Psoas muscle (tissue), 8 donors: ENCODE measurements at regions of chr3 and their contacts with region 1.

Region 1: DNA sequence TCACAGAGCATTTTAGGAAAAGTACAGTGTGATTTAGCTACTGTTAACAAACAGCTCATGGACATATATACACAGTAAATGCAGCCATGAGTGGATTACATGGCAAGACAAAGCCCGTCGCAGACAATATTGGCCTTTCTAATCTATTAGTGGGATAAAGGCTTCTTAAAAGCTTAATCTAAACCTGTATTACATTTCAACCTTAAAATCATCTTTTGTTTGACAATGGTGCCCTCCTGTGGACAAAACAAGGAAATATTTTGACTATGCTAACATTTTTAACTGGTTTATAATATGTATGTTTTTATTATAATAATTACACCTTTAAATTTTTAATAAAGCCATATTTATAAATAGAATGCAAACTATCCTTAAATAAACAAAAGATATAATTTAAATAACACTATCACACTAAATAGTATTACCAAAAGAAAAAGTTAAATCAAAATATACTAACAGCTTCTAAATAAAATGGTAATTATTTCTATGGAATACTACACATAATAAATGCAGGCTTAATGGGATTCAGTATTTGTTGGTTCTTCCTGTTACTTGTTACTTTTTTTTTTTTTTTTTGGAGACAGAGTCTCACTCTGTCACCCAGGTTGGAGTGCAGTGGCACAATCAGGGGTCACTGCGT is 38.6 kb downstream of the TAFA4 start:
- DNase-seq: no peak
- ATAC-seq: no peak
- H3K4me3 ChIP-seq: no peak overlapping the region
- H3K27ac ChIP-seq: no peak overlapping the region
- H3K4me1 ChIP-seq: no peaks in the 10 kb centered on the region
- H3K27me3 ChIP-seq: peaks cover 0 to 2% (median 0%) of the 10 kb centered on the region in 3 donors
- CTCF ChIP-seq: peak; percentile 60

Region 2: DNA sequence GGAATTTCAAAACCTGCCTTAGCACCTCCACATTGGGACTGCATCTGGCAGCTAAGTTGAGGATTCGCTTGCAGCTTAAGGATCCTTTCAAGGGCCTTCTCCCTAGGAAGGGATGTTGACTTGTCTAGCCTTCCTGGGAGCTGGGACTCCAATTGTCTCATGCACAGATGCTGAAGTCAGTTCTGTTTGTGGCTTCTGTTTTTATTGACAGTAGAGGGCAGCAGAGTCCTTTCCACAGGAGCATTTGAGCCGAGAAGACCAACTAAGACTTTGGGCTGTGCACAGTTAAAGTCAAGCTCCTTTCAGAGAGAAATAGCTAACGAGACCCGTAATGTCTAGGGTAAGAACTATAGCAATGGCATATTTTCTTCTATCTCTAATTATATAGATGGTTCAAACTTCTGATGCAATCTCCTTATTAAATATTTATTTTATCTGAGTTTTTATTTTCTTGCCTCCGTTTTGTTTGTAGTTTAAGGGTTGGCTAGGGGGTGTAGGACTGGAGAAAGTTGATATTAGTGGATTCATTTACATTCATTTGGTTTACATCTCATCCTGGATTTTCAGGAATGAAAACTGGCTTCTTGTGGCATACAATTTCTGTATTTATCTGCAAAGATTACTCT is 1955.3 kb before region 1 on chr3:
- intact Hi-C with region 1: loop called (anchors 10 kb)
- DNase-seq: no peak
- ATAC-seq: peak; percentile 50 to 70 (median 64)
- H3K4me3 ChIP-seq: no peak overlapping the region
- H3K27ac ChIP-seq: no peak overlapping the region
- H3K4me1 ChIP-seq: no peaks in the 10 kb centered on the region
- H3K27me3 ChIP-seq: peaks cover 0 to 2% (median 0%) of the 10 kb centered on the region in 3 donors
- CTCF ChIP-seq: peak; percentile 67

Region 3: DNA sequence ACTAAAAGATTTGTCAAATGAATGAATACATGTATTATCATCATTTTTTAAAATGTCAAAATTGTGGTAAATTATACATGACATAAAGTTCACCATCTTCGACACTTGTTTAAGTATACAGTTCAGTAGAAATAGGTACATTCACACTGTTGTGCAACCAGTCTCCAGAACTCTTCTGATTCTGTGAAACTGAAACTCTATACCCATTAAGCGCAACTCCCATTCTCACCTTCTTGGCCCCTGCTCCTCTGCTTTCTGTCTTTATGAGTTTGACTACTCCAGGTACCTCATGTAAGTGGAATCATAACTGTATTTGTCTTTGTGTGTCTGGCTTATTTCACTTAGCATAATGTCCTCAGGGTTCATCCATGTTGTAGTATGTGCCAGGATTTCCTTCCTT is 1945.7 kb before region 1 on chr3:
- intact Hi-C with region 1: loop called in 1 of 2 experiments (anchors 10 kb)
- DNase-seq: no peak
- ATAC-seq: no peak
- H3K4me3 ChIP-seq: no peak overlapping the region
- H3K27ac ChIP-seq: no peak overlapping the region
- H3K4me1 ChIP-seq: no peaks in the 10 kb centered on the region
- H3K27me3 ChIP-seq: no peaks in the 10 kb centered on the region
- CTCF ChIP-seq: no peak

Region 4: DNA sequence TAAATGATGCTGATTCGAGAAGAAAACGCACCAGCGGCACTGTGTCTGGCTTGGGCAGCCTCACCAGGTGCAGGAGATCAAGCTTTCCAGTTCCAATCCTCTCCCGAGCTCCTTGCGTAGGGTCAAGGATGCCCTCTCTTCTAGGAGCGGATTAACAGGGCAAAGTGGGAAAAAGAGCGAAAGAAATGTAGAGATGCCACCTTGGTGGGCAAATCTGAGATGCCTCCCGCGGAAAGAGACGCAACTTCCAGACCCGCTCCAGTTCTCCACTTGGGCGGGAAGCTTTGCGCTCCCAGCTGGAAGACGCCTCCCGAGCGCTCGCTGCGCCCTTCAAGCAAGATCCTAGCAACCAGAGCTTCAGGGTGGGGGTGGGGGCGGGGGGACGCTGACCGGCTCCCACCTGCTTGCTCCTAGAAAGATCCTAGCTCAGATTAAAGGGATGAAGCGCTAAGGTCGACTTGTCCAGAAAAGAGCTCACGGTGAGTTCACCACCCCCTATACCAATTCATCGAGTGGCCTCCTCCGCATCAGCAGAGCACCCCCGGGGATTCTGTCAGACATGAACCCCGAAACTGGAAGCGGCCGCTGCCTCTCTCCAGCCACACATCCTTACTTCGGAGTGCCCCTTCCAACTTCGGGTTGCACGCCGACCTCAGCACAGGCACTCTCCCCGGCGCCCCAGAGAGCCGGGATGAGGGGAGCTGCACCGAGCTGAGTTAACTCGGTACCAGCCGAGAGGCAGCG is 37.9 kb after region 1 on chr3:
- intact Hi-C with region 1: no loop called
- DNase-seq: no peak
- ATAC-seq: no peak
- H3K4me3 ChIP-seq: peak overlapping the region; percentile 46
- H3K27ac ChIP-seq: no peak overlapping the region
- H3K4me1 ChIP-seq: no peaks in the 10 kb centered on the region
- H3K27me3 ChIP-seq: peaks cover 4 to 72% (median 13%) of the 10 kb centered on the region in 3 donors
- CTCF ChIP-seq: no peak